WTC11 (cell line): ENCODE measurements at regions of chr20 and their contacts with region 1.

Region 1: DNA sequence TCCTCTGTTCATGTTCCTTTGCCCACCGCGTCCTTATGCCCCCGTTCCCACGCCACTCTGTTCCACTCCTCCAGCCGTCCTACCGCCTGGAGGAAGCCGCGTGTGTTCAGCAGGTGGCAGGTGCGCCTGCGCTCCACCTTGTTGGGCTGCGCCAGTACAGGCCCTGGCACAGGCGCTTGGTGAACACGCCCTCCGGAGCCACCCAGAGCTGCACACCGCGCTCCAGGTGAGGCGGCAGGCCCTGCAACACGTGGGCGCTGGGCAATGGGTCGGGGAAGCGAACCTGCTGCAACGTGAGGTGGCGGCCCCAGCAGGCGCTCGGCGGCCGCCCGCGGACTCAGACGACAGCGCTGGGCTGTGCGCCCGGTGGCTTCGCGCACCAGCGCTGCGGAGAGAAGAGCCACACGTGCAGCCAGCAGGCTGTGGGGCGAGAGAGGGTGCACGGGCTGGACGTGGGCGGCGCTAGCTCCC is 4.1 kb upstream of the FOXS1 start:
- DNase-seq: no peak
- ATAC-seq: no peak; the same call in 1 of the 2 replicates
- H3K4me3 Mint-ChIP-seq: no peak overlapping the region
- H3K27ac Mint-ChIP-seq: no peak overlapping the region
- H3K4me1 Mint-ChIP-seq: 0 out of 2 replicates have a peak, but pooled peaks cover 4% of the 10 kb centered on the region
- H3K27me3 Mint-ChIP-seq: peaks cover 40% of the 10 kb centered on the region
- CTCF ChIP-seq: no peak

Region 2: DNA sequence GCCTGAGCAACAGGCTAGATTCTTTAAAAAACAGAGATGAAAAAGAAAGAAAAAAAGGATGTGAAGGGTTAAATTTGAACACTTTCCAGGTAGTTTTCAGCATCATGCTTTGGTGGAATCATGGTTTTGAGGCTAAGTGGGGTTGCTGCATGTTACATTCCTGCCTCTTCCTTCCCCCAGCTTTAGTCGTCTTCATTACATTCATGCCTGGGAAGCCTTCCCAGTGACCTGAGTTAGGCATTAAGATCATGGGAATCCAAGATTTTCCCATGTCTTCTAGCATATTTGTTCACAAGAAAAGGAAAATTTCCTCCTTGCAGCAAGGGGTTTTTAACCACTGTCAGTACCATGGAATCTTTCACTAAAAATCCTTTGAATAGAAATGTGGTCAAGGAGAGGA is 98.4 kb before region 1 on chr20:
- CTCF ChIA-PET with region 1: no interaction called
- POLR2A ChIA-PET with region 1: no interaction called
- DNase-seq: no peak
- ATAC-seq: no peak
- H3K4me3 Mint-ChIP-seq: no peak overlapping the region
- H3K27ac Mint-ChIP-seq: peak overlapping the region; percentile 74
- H3K4me1 Mint-ChIP-seq: peaks cover 2% of the 10 kb centered on the region; the same call in 1 of the 2 replicates
- H3K27me3 Mint-ChIP-seq: no peaks in the 10 kb centered on the region
- CTCF ChIP-seq: no peak

Region 3: DNA sequence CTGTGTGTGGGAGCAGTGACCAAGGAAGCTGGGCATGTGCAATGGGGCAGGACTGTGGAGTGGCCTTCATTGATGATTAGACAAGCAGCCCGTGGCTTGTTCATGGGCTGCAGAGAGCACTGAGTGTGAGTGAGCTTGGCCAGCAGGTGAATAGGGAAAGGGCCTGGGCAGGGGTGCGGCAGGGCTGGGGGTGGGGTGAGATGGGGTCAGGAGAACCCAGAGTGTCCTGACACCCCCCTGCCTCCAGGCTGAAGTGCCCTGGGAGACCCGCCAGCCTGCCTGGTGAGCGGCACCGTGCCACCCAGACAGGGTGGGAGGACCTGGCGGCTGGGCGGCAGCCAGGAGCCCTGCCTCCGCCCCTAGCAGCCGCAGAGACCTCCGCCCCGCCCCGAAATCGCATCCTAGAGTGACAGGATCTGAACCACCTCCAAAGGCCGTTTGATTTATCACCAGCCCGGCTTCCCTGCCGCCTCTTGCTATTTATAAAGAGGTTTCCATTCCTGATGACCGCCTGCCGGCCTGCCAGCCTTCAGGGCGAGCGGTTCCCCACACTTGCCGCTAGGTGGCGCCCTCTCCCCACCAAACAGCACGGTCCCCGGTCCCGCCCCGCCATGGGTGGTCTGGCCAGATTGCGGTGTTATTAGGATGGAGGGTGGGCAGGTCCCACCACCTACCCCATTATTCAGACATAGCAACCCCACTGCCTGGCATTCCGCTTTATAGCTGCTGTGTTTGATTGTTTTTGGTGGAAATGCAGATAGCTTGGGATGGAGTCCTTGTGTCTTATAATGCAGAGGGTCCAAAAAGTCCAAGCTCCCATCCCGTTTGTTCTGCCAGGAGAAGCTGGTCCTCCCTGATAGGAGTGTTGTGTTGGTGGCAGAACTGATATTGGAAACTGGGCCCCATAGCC is 26.8 kb before region 1 on chr20:
- CTCF ChIA-PET with region 1: interaction called, 33 read pairs
- POLR2A ChIA-PET with region 1: no interaction called
- DNase-seq: peak; percentile 92
- ATAC-seq: peak; percentile 73
- H3K4me3 Mint-ChIP-seq: peak overlapping the region; percentile 49
- H3K27ac Mint-ChIP-seq: no peak overlapping the region
- H3K4me1 Mint-ChIP-seq: peaks cover 7% of the 10 kb centered on the region; the same call in 1 of the 2 replicates
- H3K27me3 Mint-ChIP-seq: no peaks in the 10 kb centered on the region
- CTCF ChIP-seq: peak; percentile 99

Region 4: GRCh38 chr20:31869942-31870725 is 20.6 kb after region 1 on chr20 and contains the starts of genes DUSP15 and TTLL9:
- CTCF ChIA-PET with region 1: interaction called, 22 read pairs
- POLR2A ChIA-PET with region 1: no interaction called
- DNase-seq: peak; percentile 60
- ATAC-seq: peak; percentile 68
- H3K4me3 Mint-ChIP-seq: peak within 1 kb of the TSS; percentile 93
- H3K27ac Mint-ChIP-seq: peak within 1 kb of the TSS; percentile 45; the same call in 1 of the 2 replicates
- H3K4me1 Mint-ChIP-seq: peaks cover 14% of the 10 kb centered on the region
- H3K27me3 Mint-ChIP-seq: peaks cover 59% of the 10 kb centered on the region
- CTCF ChIP-seq: no peak
- total RNA-seq, gene DUSP15: 1.7 to 2.4 TPM (median 2.0 TPM) in 3 replicates
- total RNA-seq, gene TTLL9: 0.39 TPM in 1 of 3 replicates, not detected in the others

Region 5: GRCh38 chr20:31968291-31969126 is 119.0 kb after region 1 on chr20:
- CTCF ChIA-PET with region 1: interaction called, 23 read pairs
- POLR2A ChIA-PET with region 1: interaction called, 4 read pairs
- DNase-seq: peak; percentile 95
- ATAC-seq: peak; percentile 85
- H3K4me3 Mint-ChIP-seq: peak overlapping the region; percentile 93
- H3K27ac Mint-ChIP-seq: peak overlapping the region; percentile 88; the same call in 1 of the 2 replicates
- H3K4me1 Mint-ChIP-seq: peaks cover 20% of the 10 kb centered on the region
- H3K27me3 Mint-ChIP-seq: peaks cover 47% of the 10 kb centered on the region
- CTCF ChIP-seq: no peak

Region 6: GRCh38 chr20:32018269-32019074 is 169.0 kb after region 1 on chr20:
- CTCF ChIA-PET with region 1: interaction called, 51 read pairs
- POLR2A ChIA-PET with region 1: interaction called, 4 read pairs
- DNase-seq: peak; percentile 96
- ATAC-seq: peak; percentile 85
- H3K4me3 Mint-ChIP-seq: peak overlapping the region; percentile 89
- H3K27ac Mint-ChIP-seq: peak overlapping the region; percentile 96
- H3K4me1 Mint-ChIP-seq: peaks cover 33% of the 10 kb centered on the region
- H3K27me3 Mint-ChIP-seq: peaks cover 16% of the 10 kb centered on the region
- CTCF ChIP-seq: peak; percentile 6; the same call in 1 of the 2 replicates

Region 7: GRCh38 chr20:32139946-32140345 is 290.5 kb after region 1 on chr20:
- CTCF ChIA-PET with region 1: no interaction called
- POLR2A ChIA-PET with region 1: no interaction called
- DNase-seq: no peak
- ATAC-seq: no peak
- H3K4me3 Mint-ChIP-seq: no peak overlapping the region
- H3K27ac Mint-ChIP-seq: no peak overlapping the region
- H3K4me1 Mint-ChIP-seq: no peaks in the 10 kb centered on the region
- H3K27me3 Mint-ChIP-seq: no peaks in the 10 kb centered on the region
- CTCF ChIP-seq: no peak

Region 8: DNA sequence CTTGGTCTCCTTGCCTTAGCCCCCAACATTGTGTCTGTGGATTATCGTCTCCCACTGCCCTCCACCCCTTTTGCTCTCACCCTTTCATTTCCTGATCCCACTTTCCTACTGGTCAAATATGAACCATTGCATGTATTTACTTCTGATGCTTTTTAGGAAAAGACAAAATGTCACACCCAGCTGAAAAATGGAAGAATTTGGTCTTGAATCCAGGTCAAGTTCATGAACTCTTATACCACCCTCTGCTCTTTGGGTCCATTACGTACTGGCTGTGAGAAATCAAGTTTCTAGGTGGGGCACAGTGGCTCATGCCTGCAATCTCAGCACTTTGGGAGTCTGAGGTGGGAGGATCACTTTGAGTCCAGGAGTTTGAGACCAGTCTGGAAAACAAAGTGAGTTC is 412.2 kb after region 1 on chr20:
- CTCF ChIA-PET with region 1: no interaction called
- POLR2A ChIA-PET with region 1: no interaction called
- DNase-seq: no peak
- ATAC-seq: no peak
- H3K4me3 Mint-ChIP-seq: no peak overlapping the region
- H3K27ac Mint-ChIP-seq: no peak overlapping the region
- H3K4me1 Mint-ChIP-seq: no peaks in the 10 kb centered on the region
- H3K27me3 Mint-ChIP-seq: 0 out of 2 replicates have a peak, but pooled peaks cover 3% of the 10 kb centered on the region
- CTCF ChIP-seq: no peak